Pancreas (tissue), 10 donors: ENCODE measurements at regions of chr7 and their contacts with region 1.

Region 1: DNA sequence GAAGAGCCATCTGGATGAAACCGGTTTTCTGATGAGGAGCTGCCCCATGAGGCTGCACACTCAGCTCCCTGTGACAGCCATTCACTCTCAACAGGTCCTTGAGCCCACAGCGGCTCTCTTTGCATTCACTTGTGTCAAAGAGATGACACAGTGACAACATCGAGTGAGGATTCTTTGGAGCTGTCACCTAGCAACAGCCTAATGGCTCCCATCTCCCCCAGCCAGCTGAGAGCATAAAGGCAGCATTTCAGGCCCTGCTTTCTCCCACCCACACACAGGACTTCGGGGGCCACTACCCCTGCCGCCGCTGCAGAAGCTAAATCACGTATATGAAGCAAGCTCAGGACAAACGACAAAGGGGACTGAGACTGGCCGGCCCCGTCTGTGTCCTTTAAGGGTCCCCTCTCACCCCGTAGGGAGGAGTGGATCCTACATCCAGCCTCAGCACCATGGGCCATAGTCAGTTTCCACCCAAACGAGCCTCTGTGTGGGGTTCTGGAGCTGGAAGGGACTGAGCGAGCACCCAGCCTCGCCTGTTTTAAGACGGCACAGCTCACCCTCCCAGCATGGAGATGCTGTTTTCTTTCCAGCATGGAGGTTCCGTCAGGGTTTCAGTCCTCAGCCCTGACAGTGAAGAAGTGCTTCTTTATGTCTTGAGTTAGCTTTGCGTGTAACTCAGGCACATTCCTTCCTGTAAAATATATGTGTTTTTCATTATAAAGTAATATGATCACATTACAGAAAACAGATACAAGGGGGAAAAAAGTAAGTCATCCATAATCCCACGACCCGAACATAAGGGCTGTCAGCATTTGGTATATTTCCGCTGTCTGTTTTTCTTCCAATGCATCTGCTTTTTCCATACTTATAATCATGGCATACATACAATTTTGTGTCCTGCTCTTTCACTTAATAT is 4.9 kb downstream of the CPA4 start:
- DNase-seq: no peak
- ATAC-seq: no peak
- H3K4me3 ChIP-seq: no peak overlapping the region
- H3K27ac ChIP-seq: no peak overlapping the region
- H3K4me1 ChIP-seq: peaks cover 0 to 2% (median 0%) of the 10 kb centered on the region in 3 donors
- H3K27me3 ChIP-seq: no peaks in the 10 kb centered on the region
- CTCF ChIP-seq: no peak

Region 2: GRCh38 chr7:130365511-130366441 is 67.9 kb after region 1 on chr7:
- intact Hi-C with region 1: loop called in 2 of 3 experiments (anchors 5 to 10 kb)
- DNase-seq: peak in 3 of 6 donors; percentile 57 to 72 (median 66)
- ATAC-seq: peak; percentile 52 to 76 (median 70)
- H3K4me3 ChIP-seq: no peak overlapping the region
- H3K27ac ChIP-seq: peak overlapping the region in 3 of 4 donors; percentile 28 to 65 (median 35)
- H3K4me1 ChIP-seq: peaks cover 25 to 45% (median 39%) of the 10 kb centered on the region in 3 donors
- H3K27me3 ChIP-seq: no peaks in the 10 kb centered on the region
- CTCF ChIP-seq: no peak

Region 3: DNA sequence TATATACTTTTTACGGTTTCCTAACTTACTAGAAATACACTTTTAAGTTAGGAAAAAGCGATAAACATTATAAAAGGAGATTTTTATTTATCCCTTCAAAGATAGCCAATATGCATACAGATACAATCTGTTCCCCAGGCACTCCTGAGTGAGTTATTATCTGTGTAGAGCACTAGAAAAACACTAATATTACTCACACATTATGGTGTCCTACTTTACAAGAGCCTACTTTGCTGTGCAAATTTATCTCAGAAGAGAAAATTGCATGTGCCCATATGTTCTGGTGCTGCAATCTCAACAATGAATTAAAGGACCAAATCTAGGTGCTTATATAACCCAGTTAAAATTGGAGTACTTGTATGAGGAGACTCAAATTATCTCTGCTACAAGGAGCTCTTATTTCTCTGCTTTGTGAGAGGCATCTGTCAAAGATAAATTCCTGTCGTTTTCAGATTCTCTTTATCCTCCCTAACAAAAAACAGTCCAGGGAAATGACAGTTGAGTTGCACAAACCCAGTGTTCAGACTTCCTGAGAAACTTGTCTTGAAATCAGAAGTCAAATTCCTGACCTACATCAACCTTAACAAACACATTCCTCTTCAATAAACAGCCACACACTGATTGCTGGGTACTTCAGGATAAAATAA is 111.3 kb after region 1 on chr7:
- intact Hi-C with region 1: no loop called
- DNase-seq: no peak
- ATAC-seq: peak in 2 of 4 donors; percentile 40 to 56
- H3K4me3 ChIP-seq: no peak overlapping the region
- H3K27ac ChIP-seq: no peak overlapping the region
- H3K4me1 ChIP-seq: peaks cover 0 to 4% (median 0%) of the 10 kb centered on the region in 3 donors
- H3K27me3 ChIP-seq: no peaks in the 10 kb centered on the region
- CTCF ChIP-seq: no peak

Region 4: DNA sequence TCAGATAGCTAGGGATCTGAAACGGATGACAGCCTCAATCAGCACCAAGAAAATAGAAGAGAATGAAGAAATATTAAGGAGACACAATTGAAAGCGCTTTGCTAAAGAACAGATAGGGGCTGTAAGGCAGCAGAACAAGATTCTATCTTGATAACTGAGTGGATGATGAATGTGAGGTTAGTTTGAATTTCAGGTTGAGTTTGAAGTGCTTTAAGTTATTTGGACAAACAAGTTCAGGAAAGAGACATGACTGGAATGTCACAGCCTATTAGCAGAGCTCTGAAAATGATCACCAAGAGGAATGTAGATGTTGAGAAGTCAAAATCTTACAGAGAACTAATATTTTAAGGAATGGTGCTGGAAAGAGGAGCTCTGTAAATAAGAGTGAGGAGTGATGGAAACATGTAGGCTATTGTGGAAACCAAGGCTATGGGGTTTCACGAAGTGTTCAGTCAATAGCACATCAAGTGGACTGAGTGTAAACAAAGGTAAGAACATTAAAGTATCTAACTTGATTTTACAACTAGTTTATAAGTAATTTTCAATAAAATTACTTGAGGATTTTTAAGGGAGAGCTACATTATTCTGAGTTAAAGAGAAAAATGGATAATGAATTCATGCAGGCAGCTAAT is 255.6 kb after region 1 on chr7:
- intact Hi-C with region 1: no loop called
- DNase-seq: no peak
- ATAC-seq: no peak
- H3K4me3 ChIP-seq: no peak overlapping the region
- H3K27ac ChIP-seq: no peak overlapping the region
- H3K4me1 ChIP-seq: no peaks in the 10 kb centered on the region
- H3K27me3 ChIP-seq: no peaks in the 10 kb centered on the region
- CTCF ChIP-seq: no peak